ENCODE measurements at regions of chr2 and their contacts with region 1.

Region 1: GRCh38 chr2:173210270-173211196 is 134.9 kb downstream of the MAP3K20 start:
- DNase-seq: peak; percentile 94
- H3K4me3 Mint-ChIP-seq: no peak overlapping the region
- H3K27ac Mint-ChIP-seq: peak overlapping the region; percentile 93
- H3K4me1 Mint-ChIP-seq: peaks cover 9% of the 10 kb centered on the region
- H3K27me3 Mint-ChIP-seq: no peaks in the 10 kb centered on the region
- CTCF ChIP-seq: peak; percentile 84

Region 2: GRCh38 chr2:172972005-172972619 is 238.4 kb before region 1 on chr2:
- CTCF ChIA-PET with region 1: interaction called, 3 read pairs
- POLR2A ChIA-PET with region 1: no interaction called
- intact Hi-C with region 1: loop called (anchors 1 kb)
- DNase-seq: peak; percentile 79
- H3K4me3 Mint-ChIP-seq: no peak overlapping the region
- H3K27ac Mint-ChIP-seq: no peak overlapping the region
- H3K4me1 Mint-ChIP-seq: peaks cover 35% of the 10 kb centered on the region
- H3K27me3 Mint-ChIP-seq: peaks cover 13% of the 10 kb centered on the region
- CTCF ChIP-seq: peak; percentile 80

Region 3: DNA sequence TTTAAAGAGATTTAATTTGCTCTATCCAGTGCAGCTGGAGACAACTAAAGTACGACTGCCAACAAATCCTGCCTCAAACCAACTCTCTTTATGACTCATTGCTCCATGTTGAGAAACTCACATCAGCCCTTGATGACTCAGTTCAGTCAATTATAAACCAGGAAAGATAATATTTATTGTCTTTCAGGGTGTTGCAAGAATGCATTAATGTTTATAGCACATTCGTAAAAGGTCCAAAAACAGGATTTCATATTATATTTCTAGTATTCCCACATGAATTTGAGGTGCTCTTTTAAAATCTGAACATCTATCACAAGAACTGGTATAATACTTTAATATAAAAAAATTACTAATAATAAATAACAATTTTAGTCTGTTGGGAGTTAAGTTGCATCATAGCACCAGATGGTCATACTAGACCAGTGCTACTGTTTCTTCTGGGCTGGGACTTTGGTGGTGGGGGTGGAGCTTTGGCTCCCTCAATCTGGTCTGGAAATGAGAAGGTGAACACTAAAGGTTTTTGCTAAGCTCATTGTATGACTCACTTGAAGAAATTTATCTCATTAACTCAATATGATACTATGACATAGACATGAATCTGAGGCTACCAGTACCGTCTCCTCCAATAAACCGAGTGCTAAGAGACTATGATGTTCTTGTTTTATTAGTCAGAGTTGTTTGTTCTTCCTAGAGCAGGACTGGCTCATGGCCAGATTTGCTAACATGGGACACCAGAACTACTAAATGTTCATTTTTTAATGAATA is 161.5 kb before region 1 on chr2:
- CTCF ChIA-PET with region 1: interaction called, 7 read pairs
- POLR2A ChIA-PET with region 1: interaction called, 14 read pairs
- intact Hi-C with region 1: loop called (anchors 1 kb)
- DNase-seq: peak; percentile 98
- H3K4me3 Mint-ChIP-seq: peak overlapping the region; percentile 62
- H3K27ac Mint-ChIP-seq: peak overlapping the region; percentile 98
- H3K4me1 Mint-ChIP-seq: peaks cover 32% of the 10 kb centered on the region
- H3K27me3 Mint-ChIP-seq: no peaks in the 10 kb centered on the region
- CTCF ChIP-seq: no peak

Region 4: GRCh38 chr2:173159794-173160463 is 50.6 kb before region 1 on chr2:
- CTCF ChIA-PET with region 1: interaction called, 4 read pairs
- POLR2A ChIA-PET with region 1: interaction called, 15 read pairs
- intact Hi-C with region 1: no loop called
- DNase-seq: peak; percentile 100
- H3K4me3 Mint-ChIP-seq: peak overlapping the region; percentile 68
- H3K27ac Mint-ChIP-seq: peak overlapping the region; percentile 93
- H3K4me1 Mint-ChIP-seq: peaks cover 46% of the 10 kb centered on the region
- H3K27me3 Mint-ChIP-seq: no peaks in the 10 kb centered on the region
- CTCF ChIP-seq: no peak

Region 5: GRCh38 chr2:173184031-173185004 is 26.2 kb before region 1 on chr2:
- CTCF ChIA-PET with region 1: no interaction called
- POLR2A ChIA-PET with region 1: interaction called, 10 read pairs
- intact Hi-C with region 1: no loop called
- DNase-seq: peak; percentile 99
- H3K4me3 Mint-ChIP-seq: no peak overlapping the region
- H3K27ac Mint-ChIP-seq: peak overlapping the region; percentile 1
- H3K4me1 Mint-ChIP-seq: peaks cover 23% of the 10 kb centered on the region
- H3K27me3 Mint-ChIP-seq: no peaks in the 10 kb centered on the region
- CTCF ChIP-seq: no peak

Measured in MCF 10A (cell line).